H1 (cell line): ENCODE measurements at regions of chr11 and their contacts with region 1.

Region 1: GRCh38 chr11:122505304-122506006 is 150.1 kb upstream of the UBASH3B start:
- DNase-seq: peak; percentile 63 to 86
- H3K4me3 ChIP-seq: no peak overlapping the region
- H3K27ac ChIP-seq: no peak overlapping the region
- H3K4me1 ChIP-seq: no peaks in the 10 kb centered on the region
- H3K27me3 ChIP-seq: no peaks in the 10 kb centered on the region
- CTCF ChIP-seq: peak; percentile 92 to 97 (median 97)
- EP300 ChIP-seq: no peak
- POLR2A ChIP-seq: no peak
- RAD21 ChIP-seq: peak; percentile 98 to 99

Region 2: GRCh38 chr11:122202951-122203456 is 302.5 kb before region 1 on chr11:
- CTCF ChIA-PET with region 1: interaction called, 11 read pairs
- POLR2A ChIA-PET with region 1: no interaction called
- DNase-seq: peak; percentile 34 to 91
- H3K4me3 ChIP-seq: peak overlapping the region in 3 of 4 experiments; percentile 13 to 39 (median 21); a peak in 3 of 8 replicates
- H3K27ac ChIP-seq: no peak overlapping the region
- H3K4me1 ChIP-seq: peaks cover 0 to 4% (median under 1%) of the 10 kb centered on the region in 4 experiments; a peak in 2 of 7 replicates
- H3K27me3 ChIP-seq: no peaks in the 10 kb centered on the region
- CTCF ChIP-seq: peak; percentile 93 to 98 (median 94)
- EP300 ChIP-seq: no peak
- POLR2A ChIP-seq: no peak
- RAD21 ChIP-seq: peak; percentile 96 to 98

Region 3: DNA sequence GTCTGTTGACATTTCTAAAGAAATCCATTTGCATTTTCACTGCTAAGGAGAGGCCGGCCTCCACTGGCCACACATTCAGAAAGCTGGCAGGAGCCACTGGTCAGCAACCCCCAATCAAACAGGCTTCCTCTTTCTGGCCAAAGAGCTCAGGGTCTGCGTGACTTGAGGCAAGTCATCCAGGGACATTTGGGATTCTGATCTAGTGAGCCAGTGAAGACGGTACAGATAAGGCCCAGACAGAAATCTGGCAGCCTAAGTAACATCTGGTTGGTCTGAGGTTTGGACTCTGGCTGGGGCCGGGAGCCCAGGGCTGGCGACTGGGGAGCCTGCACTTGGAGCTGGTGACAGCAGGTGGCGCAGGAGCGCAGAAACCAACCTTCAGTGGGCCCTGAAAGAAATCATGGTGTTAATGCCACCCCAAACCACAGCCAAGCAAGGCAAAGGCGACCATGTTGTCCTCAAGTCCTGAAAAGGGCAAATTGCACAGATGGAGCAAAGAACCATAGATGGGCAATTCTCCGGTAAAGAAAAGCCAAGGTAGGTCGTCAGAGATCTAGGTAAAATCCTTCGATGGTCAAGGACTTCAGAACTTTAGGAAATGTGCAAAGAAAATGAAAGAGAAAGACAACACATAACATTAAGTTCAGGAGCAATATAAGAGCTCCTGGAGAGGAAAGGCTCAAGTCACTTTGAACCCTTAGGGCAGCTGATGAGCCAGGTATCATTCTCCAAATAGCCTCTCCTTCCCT is 290.0 kb before region 1 on chr11:
- CTCF ChIA-PET with region 1: interaction called, 61 read pairs
- POLR2A ChIA-PET with region 1: no interaction called
- DNase-seq: peak; percentile 68 to 89
- H3K4me3 ChIP-seq: no peak overlapping the region
- H3K27ac ChIP-seq: no peak overlapping the region
- H3K4me1 ChIP-seq: peaks cover 0 to 6% (median 3%) of the 10 kb centered on the region in 4 experiments; a peak in 3 of 7 replicates
- H3K27me3 ChIP-seq: no peaks in the 10 kb centered on the region
- CTCF ChIP-seq: peak; percentile 84 to 94 (median 88)
- EP300 ChIP-seq: no peak
- POLR2A ChIP-seq: no peak
- RAD21 ChIP-seq: peak; percentile 86 to 92

Region 4: GRCh38 chr11:122287401-122287800 is 218.1 kb before region 1 on chr11:
- CTCF ChIA-PET with region 1: interaction called, 58 read pairs
- POLR2A ChIA-PET with region 1: no interaction called
- DNase-seq: no peak
- H3K4me3 ChIP-seq: no peak overlapping the region
- H3K27ac ChIP-seq: no peak overlapping the region
- H3K4me1 ChIP-seq: no peaks in the 10 kb centered on the region; a peak in 1 of 7 replicates
- H3K27me3 ChIP-seq: no peaks in the 10 kb centered on the region
- CTCF ChIP-seq: no peak
- EP300 ChIP-seq: no peak
- POLR2A ChIP-seq: no peak
- RAD21 ChIP-seq: no peak

Region 5: DNA sequence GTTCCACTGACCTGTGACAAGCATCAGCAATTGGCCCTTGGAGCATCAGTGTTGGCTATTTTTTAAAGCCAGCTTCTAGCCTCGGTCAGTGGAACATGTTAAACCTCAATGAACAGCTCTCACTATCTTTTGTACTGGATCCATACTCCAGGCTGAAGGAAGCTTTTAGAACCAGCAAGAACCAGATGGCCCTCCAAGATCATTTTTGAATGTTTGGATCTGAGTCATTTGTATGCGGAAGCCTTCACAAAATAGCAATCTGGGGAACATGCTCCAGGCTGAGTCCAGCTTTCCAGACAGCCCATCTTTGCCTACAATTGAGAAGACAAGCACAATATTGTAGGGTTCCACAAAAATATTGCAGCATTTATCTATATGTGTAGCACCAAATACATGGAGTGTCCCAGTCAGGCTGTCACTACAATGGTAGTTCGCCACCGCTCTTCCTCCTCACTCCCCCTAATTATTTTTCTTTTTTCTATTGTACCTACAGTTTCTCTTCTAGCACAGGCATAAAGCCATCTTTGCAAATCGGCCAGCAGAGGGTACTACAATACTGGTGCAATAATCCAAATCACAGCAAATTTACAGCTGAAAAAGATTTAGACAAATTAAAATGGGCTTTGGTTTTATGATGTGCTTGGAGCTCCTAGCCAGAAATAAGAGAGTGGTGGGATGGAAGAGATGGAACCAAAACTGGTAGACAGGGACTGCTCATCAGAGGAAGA is 212.0 kb before region 1 on chr11:
- CTCF ChIA-PET with region 1: interaction called, 58 read pairs
- POLR2A ChIA-PET with region 1: no interaction called
- DNase-seq: no peak
- H3K4me3 ChIP-seq: no peak overlapping the region
- H3K27ac ChIP-seq: no peak overlapping the region
- H3K4me1 ChIP-seq: no peaks in the 10 kb centered on the region
- H3K27me3 ChIP-seq: no peaks in the 10 kb centered on the region
- CTCF ChIP-seq: peak in 2 of 3 experiments; percentile 39 to 44; a peak in 3 of 4 replicates
- EP300 ChIP-seq: no peak
- POLR2A ChIP-seq: no peak
- RAD21 ChIP-seq: peak; percentile 77 to 84

Region 6: DNA sequence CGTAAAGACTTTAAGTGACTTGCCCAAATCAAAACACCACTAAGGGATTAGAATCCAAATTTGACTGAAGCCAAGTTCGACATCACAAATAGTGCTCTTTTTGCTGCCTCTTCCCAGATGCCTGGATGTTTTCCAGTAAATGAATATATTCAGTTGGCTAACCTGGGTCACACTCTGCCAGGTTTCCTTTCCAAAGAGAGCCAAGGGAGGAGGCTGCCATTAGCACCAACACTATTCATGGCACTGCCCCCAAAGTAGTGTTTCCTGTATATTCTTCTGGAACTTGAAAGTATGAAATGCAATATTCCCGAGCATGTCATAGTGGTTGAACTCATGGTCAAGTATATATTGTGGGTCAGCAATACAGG is 69.3 kb before region 1 on chr11:
- CTCF ChIA-PET with region 1: no interaction called
- POLR2A ChIA-PET with region 1: no interaction called
- DNase-seq: no peak
- H3K4me3 ChIP-seq: no peak overlapping the region
- H3K27ac ChIP-seq: no peak overlapping the region
- H3K4me1 ChIP-seq: peaks cover 4 to 11% (median 9%) of the 10 kb centered on the region in 4 experiments; a peak in 5 of 7 replicates
- H3K27me3 ChIP-seq: 0 out of 7 replicates have a peak, but pooled peaks cover 0 to 2% (median 0%) of the 10 kb centered on the region in 4 experiments
- CTCF ChIP-seq: no peak
- EP300 ChIP-seq: no peak
- POLR2A ChIP-seq: no peak
- RAD21 ChIP-seq: no peak

Region 7: DNA sequence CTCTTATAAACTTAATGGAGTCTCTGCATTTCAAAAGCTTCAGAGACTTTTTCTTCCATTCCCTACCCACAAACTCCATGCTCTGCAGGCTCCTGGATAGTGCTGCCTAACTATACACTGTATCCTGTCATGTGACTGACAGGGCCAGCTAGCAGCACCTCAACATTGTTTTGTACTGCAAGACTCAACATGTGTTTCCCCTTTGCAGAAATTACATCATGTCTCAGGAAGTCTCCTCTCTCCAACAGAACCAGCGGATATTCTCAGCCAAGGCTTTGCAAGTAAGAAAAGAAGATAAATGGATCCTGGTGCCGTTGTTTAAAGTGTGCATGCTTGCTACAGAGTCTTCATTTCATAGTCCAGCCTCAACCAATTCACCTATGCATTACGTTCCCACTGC is 13.9 kb before region 1 on chr11:
- CTCF ChIA-PET with region 1: interaction called, 13 read pairs
- POLR2A ChIA-PET with region 1: no interaction called
- DNase-seq: no peak
- H3K4me3 ChIP-seq: no peak overlapping the region
- H3K27ac ChIP-seq: no peak overlapping the region
- H3K4me1 ChIP-seq: peaks cover 0 to 3% (median 2%) of the 10 kb centered on the region in 4 experiments; a peak in 3 of 7 replicates
- H3K27me3 ChIP-seq: no peaks in the 10 kb centered on the region
- CTCF ChIP-seq: no peak
- EP300 ChIP-seq: no peak
- POLR2A ChIP-seq: no peak
- RAD21 ChIP-seq: no peak

Region 8: DNA sequence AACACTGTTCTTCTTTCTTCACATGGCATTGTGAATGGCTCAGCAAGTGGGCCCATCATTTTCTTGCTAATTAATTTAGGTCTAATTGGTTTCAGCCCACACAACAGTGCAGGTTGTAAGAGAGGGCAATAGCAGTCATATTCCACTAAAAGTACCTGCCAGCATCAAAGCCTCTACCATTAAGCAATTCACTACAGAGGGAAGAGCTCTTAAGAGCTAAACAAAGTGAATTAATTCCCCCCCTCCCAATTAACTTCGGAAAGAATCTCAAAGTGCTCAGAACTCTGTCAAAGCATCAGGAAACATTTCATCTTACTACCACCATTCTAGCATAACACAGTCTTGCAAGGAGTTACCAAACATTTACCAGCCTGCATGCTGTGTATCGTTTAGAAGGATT is 16.2 kb after region 1 on chr11:
- CTCF ChIA-PET with region 1: interaction called, 14 read pairs
- POLR2A ChIA-PET with region 1: no interaction called
- DNase-seq: no peak
- H3K4me3 ChIP-seq: no peak overlapping the region
- H3K27ac ChIP-seq: no peak overlapping the region
- H3K4me1 ChIP-seq: peaks cover 3 to 8% (median 6%) of the 10 kb centered on the region in 4 experiments; a peak in 4 of 7 replicates
- H3K27me3 ChIP-seq: no peaks in the 10 kb centered on the region
- CTCF ChIP-seq: no peak
- EP300 ChIP-seq: no peak
- POLR2A ChIP-seq: no peak
- RAD21 ChIP-seq: no peak